ENCODE measurements at regions of chr3 and their contacts with region 1.

Region 1: GRCh38 chr3:112519424-112520001 is 20.2 kb upstream of the BTLA start:
- DNase-seq: peak; percentile 79
- ATAC-seq: peak; percentile 86
- H3K4me3 ChIP-seq: no peak overlapping the region
- H3K4me3 Mint-ChIP-seq: peak overlapping the region; percentile 49
- H3K27ac ChIP-seq: peak overlapping the region in 1 of 2 donors; percentile 74
- H3K27ac Mint-ChIP-seq: peak overlapping the region; percentile 87
- H3K4me1 ChIP-seq: peaks cover 21 to 32% of the 10 kb centered on the region in 2 donors
- H3K4me1 Mint-ChIP-seq: peaks cover 35% of the 10 kb centered on the region
- H3K27me3 ChIP-seq: no peaks in the 10 kb centered on the region
- H3K27me3 Mint-ChIP-seq: no peaks in the 10 kb centered on the region
- CTCF ChIP-seq: peak; percentile 89

Region 2: DNA sequence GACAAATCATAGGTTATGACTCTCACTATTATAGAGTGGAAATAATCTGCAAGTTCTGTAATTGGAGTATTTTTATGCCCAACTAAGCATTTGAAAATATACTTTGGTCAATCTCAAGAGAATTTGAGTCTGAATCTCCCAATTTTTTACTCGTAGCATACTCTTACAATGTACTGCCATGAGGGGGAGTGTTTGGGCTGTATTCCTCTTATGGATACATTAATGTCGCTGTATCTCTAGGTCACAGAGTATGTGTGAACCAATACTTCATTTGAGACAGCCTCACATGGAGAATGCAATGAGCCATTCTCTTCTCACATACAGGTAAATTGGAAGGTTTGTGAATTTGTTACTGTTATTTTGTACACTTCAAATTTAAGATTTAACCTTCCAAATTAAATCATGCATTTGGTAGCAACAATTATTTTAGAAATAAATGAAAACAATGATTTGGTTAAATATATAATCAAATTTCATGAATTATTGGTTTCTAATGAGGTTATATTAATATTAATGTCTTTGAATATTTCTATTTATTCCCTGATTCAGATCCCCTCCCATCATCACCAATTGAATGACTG is 192.1 kb before region 1 on chr3:
- CTCF ChIA-PET with region 1: interaction called, 23 read pairs
- POLR2A ChIA-PET with region 1: interaction called, 6 read pairs
- intact Hi-C with region 1: loop called (anchors 1 kb)
- DNase-seq: peak; percentile 80
- ATAC-seq: peak; percentile 99
- H3K4me3 ChIP-seq: no peak overlapping the region
- H3K4me3 Mint-ChIP-seq: no peak overlapping the region
- H3K27ac ChIP-seq: no peak overlapping the region
- H3K27ac Mint-ChIP-seq: no peak overlapping the region
- H3K4me1 ChIP-seq: peaks cover 1 to 3% of the 10 kb centered on the region in 2 donors
- H3K4me1 Mint-ChIP-seq: peaks cover 8% of the 10 kb centered on the region
- H3K27me3 ChIP-seq: no peaks in the 10 kb centered on the region
- H3K27me3 Mint-ChIP-seq: no peaks in the 10 kb centered on the region
- CTCF ChIP-seq: peak; percentile 88

Region 3: DNA sequence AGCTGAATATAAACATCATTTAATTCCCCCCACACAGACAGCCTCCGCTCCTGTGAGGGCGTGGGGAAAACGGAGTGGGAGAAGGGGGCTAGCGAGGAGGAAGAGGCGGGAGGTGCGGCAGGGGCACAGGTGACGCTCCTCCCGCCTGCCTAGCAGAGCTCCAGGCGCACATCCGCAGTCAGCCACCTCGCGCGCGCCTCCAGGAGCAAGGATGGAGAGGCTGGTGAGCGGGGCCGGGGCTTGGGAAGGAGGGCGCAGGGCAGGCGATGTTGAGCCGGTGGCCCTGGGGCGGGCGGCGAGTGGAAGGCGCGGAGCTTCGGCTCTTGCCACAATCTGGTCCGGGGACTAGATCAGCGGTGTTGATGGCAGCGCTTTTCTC is 186.5 kb before region 1 on chr3 and contains the start of gene CD200:
- CTCF ChIA-PET with region 1: interaction called, 23 read pairs
- POLR2A ChIA-PET with region 1: interaction called, 6 read pairs
- intact Hi-C with region 1: no loop called
- DNase-seq: peak; percentile 64
- ATAC-seq: peak; percentile 77
- H3K4me3 ChIP-seq: peak within 1 kb of the TSS; percentile 65 to 93 (median 89)
- H3K4me3 Mint-ChIP-seq: peak within 1 kb of the TSS; percentile 94
- H3K27ac ChIP-seq: peak within 1 kb of the TSS; percentile 70 to 83
- H3K27ac Mint-ChIP-seq: peak within 1 kb of the TSS; percentile 95
- H3K4me1 ChIP-seq: peaks cover 29 to 31% of the 10 kb centered on the region in 2 donors
- H3K4me1 Mint-ChIP-seq: peaks cover 50% of the 10 kb centered on the region
- H3K27me3 ChIP-seq: no peaks in the 10 kb centered on the region
- H3K27me3 Mint-ChIP-seq: no peaks in the 10 kb centered on the region
- CTCF ChIP-seq: no peak
- total RNA-seq, gene CD200: 35.0 and 36.0 TPM in 2 replicates

Region 4: DNA sequence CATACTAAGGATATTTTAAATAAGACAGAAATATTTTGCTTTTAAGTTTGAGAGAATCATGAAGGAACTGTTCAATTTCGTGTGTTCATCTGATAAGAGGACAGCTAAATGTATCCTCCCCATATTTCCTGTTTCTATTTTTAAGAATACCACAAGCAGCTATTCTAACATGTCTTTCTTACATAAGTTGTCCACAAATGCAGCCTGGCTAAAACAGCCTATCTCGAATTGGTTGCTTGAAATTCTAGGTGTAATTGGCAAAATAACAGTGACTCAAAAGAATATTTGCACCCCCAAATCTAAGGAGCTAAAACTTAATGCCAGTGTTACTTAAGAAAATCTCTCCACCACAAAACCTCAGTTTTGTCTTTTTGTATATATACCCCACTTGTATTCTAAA is 55.2 kb before region 1 on chr3:
- CTCF ChIA-PET with region 1: interaction called, 4 read pairs
- POLR2A ChIA-PET with region 1: no interaction called
- intact Hi-C with region 1: loop called (anchors 5 kb)
- DNase-seq: peak; percentile 60
- ATAC-seq: peak; percentile 76
- H3K4me3 ChIP-seq: peak overlapping the region in 1 of 5 experiments; percentile 53
- H3K4me3 Mint-ChIP-seq: peak overlapping the region; percentile 67
- H3K27ac ChIP-seq: peak overlapping the region; percentile 64 to 80
- H3K27ac Mint-ChIP-seq: peak overlapping the region; percentile 81
- H3K4me1 ChIP-seq: peaks cover 81 to 86% of the 10 kb centered on the region in 2 donors
- H3K4me1 Mint-ChIP-seq: peaks cover 86% of the 10 kb centered on the region
- H3K27me3 ChIP-seq: no peaks in the 10 kb centered on the region
- H3K27me3 Mint-ChIP-seq: no peaks in the 10 kb centered on the region
- CTCF ChIP-seq: no peak

Region 5: GRCh38 chr3:112498914-112499711 is 20.4 kb before region 1 on chr3 and contains the start of gene BTLA:
- CTCF ChIA-PET with region 1: interaction called, 32 read pairs
- POLR2A ChIA-PET with region 1: interaction called, 12 read pairs
- intact Hi-C with region 1: loop called (anchors 1 kb)
- DNase-seq: peak; percentile 78
- ATAC-seq: peak; percentile 71
- H3K4me3 ChIP-seq: peak within 1 kb of the TSS; percentile 66 to 96 (median 82)
- H3K4me3 Mint-ChIP-seq: peak within 1 kb of the TSS; percentile 94
- H3K27ac ChIP-seq: peak within 1 kb of the TSS; percentile 92 to 96
- H3K27ac Mint-ChIP-seq: peak within 1 kb of the TSS; percentile 97
- H3K4me1 ChIP-seq: peaks cover 47 to 53% of the 10 kb centered on the region in 2 donors
- H3K4me1 Mint-ChIP-seq: peaks cover 69% of the 10 kb centered on the region
- H3K27me3 ChIP-seq: no peaks in the 10 kb centered on the region
- H3K27me3 Mint-ChIP-seq: no peaks in the 10 kb centered on the region
- CTCF ChIP-seq: no peak
- total RNA-seq, gene BTLA: 91.6 and 101 TPM in 2 replicates

Region 6: DNA sequence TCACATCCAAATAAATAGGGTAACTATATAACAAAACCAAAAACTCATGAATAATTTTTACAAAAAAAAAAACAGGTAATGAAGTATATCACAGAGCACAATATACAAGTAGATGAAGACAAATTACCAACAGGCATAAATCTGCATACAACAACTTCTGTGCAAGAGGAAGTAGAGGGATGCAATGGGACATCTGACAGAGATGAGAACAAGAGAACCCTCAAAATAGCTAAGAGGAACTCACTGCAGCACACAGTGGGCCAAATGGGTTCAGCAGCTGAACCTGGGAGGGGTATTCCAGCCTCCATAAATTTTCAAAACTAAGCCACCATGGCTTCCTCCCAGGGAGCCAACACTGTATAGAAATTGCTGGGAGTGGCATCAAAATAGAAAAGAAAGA is 10.7 kb before region 1 on chr3:
- CTCF ChIA-PET with region 1: interaction called, 14 read pairs
- POLR2A ChIA-PET with region 1: interaction called, 3 read pairs
- intact Hi-C with region 1: loop called (anchors 1 kb)
- DNase-seq: peak; percentile 54
- ATAC-seq: peak; percentile 50
- H3K4me3 ChIP-seq: peak overlapping the region in 1 of 5 experiments; percentile 17
- H3K4me3 Mint-ChIP-seq: peak overlapping the region; percentile 48
- H3K27ac ChIP-seq: peak overlapping the region; percentile 35 to 81
- H3K27ac Mint-ChIP-seq: peak overlapping the region; percentile 82
- H3K4me1 ChIP-seq: peaks cover 58 to 70% of the 10 kb centered on the region in 2 donors
- H3K4me1 Mint-ChIP-seq: peaks cover 71% of the 10 kb centered on the region
- H3K27me3 ChIP-seq: no peaks in the 10 kb centered on the region
- H3K27me3 Mint-ChIP-seq: no peaks in the 10 kb centered on the region
- CTCF ChIP-seq: peak; percentile 10

Region 7: DNA sequence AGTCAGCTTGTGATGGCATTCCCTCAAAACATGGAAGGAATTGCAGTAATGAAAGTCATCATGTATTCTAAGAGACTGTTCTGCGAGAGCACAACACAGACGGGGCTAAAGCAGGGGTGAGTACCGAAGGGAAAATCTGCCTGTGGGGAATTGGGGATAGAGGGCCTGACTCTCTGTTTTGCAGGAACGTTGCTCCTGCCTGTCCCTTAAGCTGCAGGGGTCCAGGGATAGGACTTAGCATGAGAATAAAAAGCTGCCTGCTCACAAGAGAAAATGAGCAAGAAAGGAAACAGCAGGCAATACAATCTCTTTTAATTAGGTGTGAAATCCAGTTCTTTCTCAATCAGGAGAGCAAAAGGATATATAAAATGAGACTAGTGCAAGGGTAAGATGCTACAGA is 1836.6 kb after region 1 on chr3:
- CTCF ChIA-PET with region 1: no interaction called
- POLR2A ChIA-PET with region 1: no interaction called
- intact Hi-C with region 1: no loop called
- DNase-seq: no peak
- ATAC-seq: no peak
- H3K4me3 ChIP-seq: no peak overlapping the region
- H3K4me3 Mint-ChIP-seq: no peak overlapping the region
- H3K27ac ChIP-seq: no peak overlapping the region
- H3K27ac Mint-ChIP-seq: no peak overlapping the region
- H3K4me1 ChIP-seq: no peaks in the 10 kb centered on the region
- H3K4me1 Mint-ChIP-seq: no peaks in the 10 kb centered on the region
- H3K27me3 ChIP-seq: no peaks in the 10 kb centered on the region
- H3K27me3 Mint-ChIP-seq: no peaks in the 10 kb centered on the region
- CTCF ChIP-seq: no peak

Measured in B cell (primary cell).